ENCODE measurements at regions of chr16 and their contacts with region 1.

Region 1: DNA sequence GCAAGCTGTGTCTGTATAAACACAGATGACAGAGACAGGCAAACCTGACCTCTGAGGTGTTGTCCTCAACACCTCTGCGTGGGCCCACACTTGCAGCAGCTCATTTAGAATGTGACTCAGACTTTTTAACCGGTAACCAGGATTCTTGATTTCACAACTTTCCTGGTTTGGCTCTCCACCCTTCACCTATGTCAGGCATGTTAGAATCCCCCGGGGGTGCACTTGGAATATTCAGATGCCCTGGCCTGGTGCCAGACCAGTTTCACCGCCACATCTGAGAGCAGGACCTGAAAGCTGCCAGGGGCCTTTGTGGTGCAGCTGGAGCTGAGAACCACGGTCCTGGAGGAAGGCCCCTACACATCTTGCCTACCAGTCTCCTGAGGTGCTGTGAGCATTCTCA is 4.8 kb downstream of the DHODH start:
- DNase-seq: no peak
- H3K4me3 ChIP-seq: no peak overlapping the region
- H3K27ac ChIP-seq: peak overlapping the region in 1 of 4 donors; percentile 43
- H3K4me1 ChIP-seq: peaks cover 4 to 22% (median 6%) of the 10 kb centered on the region in 4 donors
- H3K27me3 ChIP-seq: no peaks in the 10 kb centered on the region
- CTCF ChIP-seq: no peak
- EP300 ChIP-seq: no peak
- POLR2A ChIP-seq: no peak

Region 2: GRCh38 chr16:72093448-72094265 is 80.3 kb after region 1 on chr16 and contains the starts of genes DHX38 and TXNL4B:
- intact Hi-C with region 1: loop called (anchors 5 kb)
- DNase-seq: peak; percentile 98
- H3K4me3 ChIP-seq: peak within 1 kb of the TSS; percentile 85 to 96 (median 89)
- H3K27ac ChIP-seq: peak within 1 kb of the TSS; percentile 91 to 95 (median 92)
- H3K4me1 ChIP-seq: peaks cover 30 to 45% (median 38%) of the 10 kb centered on the region in 4 donors
- H3K27me3 ChIP-seq: no peaks in the 10 kb centered on the region
- CTCF ChIP-seq: no peak
- EP300 ChIP-seq: no peak
- POLR2A ChIP-seq: peak; percentile 61
- total RNA-seq, gene DHX38: 59.0 to 70.2 (median 62.8) TPM
- total RNA-seq, gene TXNL4B: 4.6 to 7.5 (median 6.4) TPM

Measured in esophagus muscularis mucosa (tissue), 4 donors.